Activated naive CD4-positive, alpha-beta T cell treated with anti-CD3 and anti-CD28 coated beads for 36 hours (primary cell): ENCODE measurements at regions of chr17 and their contacts with region 1.

Region 1: GRCh38 chr17:45284176-45285140 is 22.6 kb upstream of the SPATA32 start:
- DNase-seq: peak; percentile 59
- H3K4me3 Mint-ChIP-seq: no peak overlapping the region
- H3K27ac Mint-ChIP-seq: peak overlapping the region; percentile 90
- H3K4me1 Mint-ChIP-seq: peaks cover 4% of the 10 kb centered on the region
- H3K27me3 Mint-ChIP-seq: no peaks in the 10 kb centered on the region

Region 2: DNA sequence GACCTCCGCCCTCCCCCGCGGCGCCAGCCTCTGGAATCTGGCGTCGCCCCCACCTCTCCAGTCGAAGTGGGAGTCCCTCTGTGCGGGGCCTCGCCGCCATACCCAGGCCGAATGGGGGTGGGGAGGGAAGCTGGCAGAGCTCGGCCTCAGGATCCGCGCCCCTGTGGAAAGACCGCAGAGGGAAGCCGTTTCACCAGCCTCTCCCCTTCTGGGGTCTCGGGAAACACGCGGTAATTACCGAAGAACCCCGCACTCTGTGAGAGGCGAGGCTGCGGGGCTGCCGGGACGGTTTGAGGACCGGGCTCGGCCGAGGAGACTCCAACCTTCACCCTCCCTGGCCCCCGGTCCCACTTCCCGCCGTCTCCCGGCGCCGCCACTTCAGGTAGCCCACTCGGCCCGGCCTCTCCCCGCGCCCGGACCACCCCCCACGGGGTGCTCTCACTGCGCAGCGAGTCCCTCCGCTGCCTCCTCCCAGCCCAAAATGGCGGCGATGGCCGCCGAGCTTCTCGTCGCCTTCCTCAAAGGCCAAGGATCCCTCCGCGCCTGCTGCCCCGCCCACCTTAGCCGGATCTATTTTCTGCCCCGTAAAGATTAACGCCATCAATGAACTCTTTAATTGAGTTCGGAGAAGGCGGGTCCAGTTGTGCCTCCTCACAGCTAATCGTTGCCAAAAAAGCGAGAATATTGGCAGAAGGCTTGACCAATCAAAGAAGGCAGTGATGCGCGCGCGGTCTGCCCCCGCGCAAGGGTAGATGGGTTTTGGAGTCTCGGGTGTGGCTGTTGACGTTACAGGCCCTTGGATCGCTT is 123.2 kb before region 1 on chr17:
- CTCF ChIA-PET with region 1: no interaction called
- intact Hi-C with region 1: no loop called
- DNase-seq: peak; percentile 99
- H3K4me3 Mint-ChIP-seq: peak overlapping the region; percentile 96
- H3K27ac Mint-ChIP-seq: peak overlapping the region; percentile 96
- H3K4me1 Mint-ChIP-seq: peaks cover 33% of the 10 kb centered on the region
- H3K27me3 Mint-ChIP-seq: no peaks in the 10 kb centered on the region

Region 3: DNA sequence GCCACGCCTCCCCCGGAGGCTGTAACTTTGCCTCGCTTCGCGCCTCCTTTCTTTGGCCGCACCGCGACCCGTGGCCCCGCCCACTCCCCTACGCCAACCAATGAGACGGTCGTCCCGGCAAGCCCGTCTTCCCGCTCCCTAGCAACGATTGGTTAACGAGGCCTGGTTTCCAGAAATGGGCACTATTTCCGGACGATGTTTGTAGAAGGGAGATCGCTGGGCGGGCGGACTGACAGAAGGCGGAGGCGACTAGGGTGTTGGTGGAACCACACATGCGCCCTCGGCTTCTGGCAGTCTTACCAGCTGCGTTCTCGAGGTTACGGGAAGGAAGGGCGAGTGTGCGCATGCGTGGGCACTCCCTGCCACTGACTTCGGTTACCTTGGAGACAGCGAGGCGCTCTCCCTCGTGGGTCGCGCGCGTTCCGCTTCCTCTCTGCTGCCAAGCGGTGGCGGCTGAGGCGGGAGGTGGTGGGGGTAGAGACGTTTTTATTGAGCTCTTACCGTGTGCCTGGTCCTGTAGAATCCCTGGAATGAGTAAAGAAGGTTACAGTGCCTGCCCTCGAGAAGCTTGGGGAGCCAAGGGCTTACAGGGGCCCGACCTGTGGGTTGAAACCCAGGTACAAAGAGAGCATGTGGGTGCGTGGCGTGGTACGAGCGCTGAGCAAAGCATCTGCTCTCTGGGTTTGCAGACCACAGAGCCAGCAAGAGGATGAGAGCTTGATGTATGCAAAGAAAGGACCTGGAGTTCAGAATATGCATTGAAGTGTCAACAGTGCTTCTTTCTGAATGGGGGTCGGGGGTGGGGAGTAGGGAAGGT is 32.9 kb after region 1 on chr17:
- CTCF ChIA-PET with region 1: interaction called, 5 read pairs
- intact Hi-C with region 1: loop called (anchors 2 kb)
- DNase-seq: peak; percentile 100
- H3K4me3 Mint-ChIP-seq: peak overlapping the region; percentile 85
- H3K27ac Mint-ChIP-seq: peak overlapping the region; percentile 86
- H3K4me1 Mint-ChIP-seq: peaks cover 67% of the 10 kb centered on the region
- H3K27me3 Mint-ChIP-seq: no peaks in the 10 kb centered on the region

Region 4: DNA sequence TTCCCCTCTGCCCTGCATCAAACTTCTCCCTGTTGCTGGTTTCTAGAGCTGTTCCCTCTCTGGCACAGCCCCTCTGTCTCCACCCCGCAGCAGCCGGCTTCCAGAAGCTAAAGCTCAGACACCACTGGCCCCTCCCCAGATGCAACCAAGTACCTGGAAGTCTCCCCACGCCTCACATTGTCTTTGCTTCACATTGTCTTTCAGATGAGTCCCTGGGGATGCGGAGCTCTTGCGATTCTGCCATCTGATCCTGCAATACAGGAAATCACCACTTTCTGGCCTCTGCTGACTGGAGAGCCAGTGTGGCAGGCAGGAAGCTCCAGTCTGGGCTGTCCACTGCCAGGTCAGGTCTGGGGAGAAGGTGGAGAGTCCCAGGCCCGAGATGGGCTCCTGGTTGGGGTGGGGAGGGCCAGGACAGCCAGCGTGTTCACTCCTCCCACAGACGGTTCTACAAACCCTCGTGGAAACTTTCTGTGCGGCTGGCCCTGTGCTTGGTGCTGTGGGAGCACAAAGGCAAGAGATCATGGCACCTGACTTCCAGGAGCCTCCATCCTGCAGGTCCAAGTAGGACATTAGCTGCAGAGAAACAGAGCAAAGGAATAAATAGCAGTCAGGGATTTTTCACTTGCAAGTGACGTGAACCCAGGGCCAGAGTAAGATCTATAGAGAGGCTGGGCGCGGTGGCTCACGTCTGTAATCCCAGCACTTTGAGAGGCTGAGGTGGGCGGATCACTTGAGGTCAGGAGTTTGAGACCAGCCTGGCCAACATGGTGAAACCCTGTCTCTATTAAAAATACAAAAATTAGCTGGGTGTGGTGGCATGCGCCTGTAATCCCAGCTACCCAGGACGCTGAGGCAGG is 80.3 kb after region 1 on chr17:
- CTCF ChIA-PET with region 1: no interaction called
- intact Hi-C with region 1: no loop called
- DNase-seq: peak; percentile 1
- H3K4me3 Mint-ChIP-seq: no peak overlapping the region
- H3K27ac Mint-ChIP-seq: no peak overlapping the region
- H3K4me1 Mint-ChIP-seq: no peaks in the 10 kb centered on the region
- H3K27me3 Mint-ChIP-seq: peaks cover 7% of the 10 kb centered on the region

Region 5: DNA sequence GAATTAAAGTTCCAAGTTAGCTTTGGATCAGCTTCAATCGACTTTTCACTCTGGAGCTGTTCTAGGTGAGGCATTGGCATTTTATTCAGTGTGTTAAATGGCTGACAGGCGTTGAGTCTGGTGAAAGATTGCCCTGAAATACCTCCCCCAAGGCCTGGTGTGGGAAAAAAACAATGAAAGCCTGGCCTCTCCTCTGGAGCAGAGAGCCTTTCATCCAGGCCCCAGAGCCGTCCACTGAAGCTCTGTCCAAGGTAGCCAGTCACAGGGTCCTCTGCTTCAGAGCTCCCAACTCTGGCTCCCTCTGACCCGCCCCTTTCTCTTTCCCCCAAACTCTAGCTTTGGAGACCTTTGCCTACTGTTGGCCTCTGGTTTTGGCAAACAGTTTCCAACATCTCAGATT is 376.0 kb after region 1 on chr17:
- CTCF ChIA-PET with region 1: no interaction called
- intact Hi-C with region 1: no loop called
- DNase-seq: no peak
- H3K4me3 Mint-ChIP-seq: no peak overlapping the region
- H3K27ac Mint-ChIP-seq: no peak overlapping the region
- H3K4me1 Mint-ChIP-seq: no peaks in the 10 kb centered on the region
- H3K27me3 Mint-ChIP-seq: peaks cover 5% of the 10 kb centered on the region

Region 6: DNA sequence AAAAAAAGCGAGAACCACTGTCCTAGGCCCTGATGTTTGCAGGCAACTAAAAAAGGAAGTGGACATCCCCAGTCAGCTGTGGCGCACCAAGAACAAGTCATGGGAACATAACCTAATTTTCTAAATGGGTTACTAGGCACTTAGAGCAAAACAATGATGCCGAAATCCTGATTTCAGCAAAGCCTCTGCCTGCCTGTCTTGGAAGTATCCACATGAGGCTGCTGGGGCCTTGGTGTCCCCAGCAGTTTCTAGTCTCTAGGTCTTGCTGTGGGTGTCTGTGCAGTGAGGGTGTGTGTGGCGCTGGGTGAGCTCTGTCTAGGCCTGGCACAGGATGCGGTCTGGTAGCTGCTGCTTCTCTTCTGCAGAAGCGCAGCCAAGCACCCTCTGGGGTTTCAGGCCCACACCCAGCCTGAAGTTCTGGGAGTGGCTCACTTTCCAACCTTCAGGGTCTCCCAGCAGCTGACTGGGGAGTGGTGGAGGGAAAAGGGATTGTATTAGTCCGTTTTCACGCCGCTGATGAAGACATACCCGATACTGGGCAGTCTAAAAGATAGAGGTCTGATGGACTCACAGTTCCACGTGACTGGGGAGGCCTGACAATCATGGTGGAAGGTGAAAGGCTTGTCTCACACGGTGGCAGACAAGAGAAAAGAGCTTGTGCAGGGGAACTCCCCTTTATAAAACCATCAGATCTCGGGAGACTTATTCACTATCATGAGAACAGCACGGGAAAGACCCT is 735.7 kb after region 1 on chr17:
- CTCF ChIA-PET with region 1: no interaction called
- intact Hi-C with region 1: no loop called
- DNase-seq: peak; percentile 47
- H3K4me3 Mint-ChIP-seq: peak overlapping the region; percentile 27
- H3K27ac Mint-ChIP-seq: peak overlapping the region; percentile 84
- H3K4me1 Mint-ChIP-seq: peaks cover 13% of the 10 kb centered on the region
- H3K27me3 Mint-ChIP-seq: no peaks in the 10 kb centered on the region